CD8-positive, alpha-beta T cell (primary cell): ENCODE measurements at regions of chr15 and their contacts with region 1.

Region 1: GRCh38 chr15:43903864-43904290 is 77.1 kb downstream of the WDR76 start:
- DNase-seq: peak; percentile 6 to 67 (median 45)
- ATAC-seq: peak; percentile 61
- H3K4me3 ChIP-seq: no peak overlapping the region
- H3K4me3 Mint-ChIP-seq: no peak overlapping the region
- H3K27ac ChIP-seq: no peak overlapping the region
- H3K27ac Mint-ChIP-seq: no peak overlapping the region
- H3K4me1 ChIP-seq: peaks cover 4% of the 10 kb centered on the region
- H3K4me1 Mint-ChIP-seq: peaks cover 3% of the 10 kb centered on the region
- H3K27me3 ChIP-seq: no peaks in the 10 kb centered on the region
- H3K27me3 Mint-ChIP-seq: peaks cover 2% of the 10 kb centered on the region
- CTCF ChIP-seq: peak; percentile 62

Region 2: DNA sequence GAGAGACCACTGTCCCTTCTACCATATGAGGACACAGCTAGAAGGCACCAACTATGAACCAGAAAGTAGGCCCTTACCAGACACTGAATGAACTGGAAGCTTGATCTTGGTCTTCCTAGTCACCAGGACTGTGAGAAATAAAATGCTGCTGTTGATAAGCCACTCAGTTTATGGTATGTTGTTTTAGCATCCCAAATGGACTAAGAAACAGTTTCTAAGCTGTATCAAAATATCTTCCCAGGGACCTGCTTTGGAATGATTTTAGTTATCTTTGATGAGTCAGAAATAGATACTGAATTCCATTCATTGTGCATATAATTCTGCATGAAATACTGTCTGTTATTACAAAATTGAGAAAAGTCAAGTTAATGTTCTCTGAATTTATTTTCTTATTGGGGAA is 58.5 kb before region 1 on chr15:
- CTCF ChIA-PET with region 1: no interaction called
- POLR2A ChIA-PET with region 1: no interaction called
- intact Hi-C with region 1: no loop called
- DNase-seq: no peak
- ATAC-seq: no peak
- H3K4me3 ChIP-seq: no peak overlapping the region
- H3K4me3 Mint-ChIP-seq: no peak overlapping the region
- H3K27ac ChIP-seq: no peak overlapping the region
- H3K27ac Mint-ChIP-seq: no peak overlapping the region
- H3K4me1 ChIP-seq: no peaks in the 10 kb centered on the region
- H3K4me1 Mint-ChIP-seq: no peaks in the 10 kb centered on the region
- H3K27me3 ChIP-seq: no peaks in the 10 kb centered on the region
- H3K27me3 Mint-ChIP-seq: no peaks in the 10 kb centered on the region
- CTCF ChIP-seq: no peak

Region 3: GRCh38 chr15:44215594-44215993 is 311.7 kb after region 1 on chr15:
- CTCF ChIA-PET with region 1: interaction called, 9 read pairs
- POLR2A ChIA-PET with region 1: no interaction called
- intact Hi-C with region 1: loop called (anchors 2 to 10 kb)
- DNase-seq: no peak
- ATAC-seq: no peak
- H3K4me3 ChIP-seq: no peak overlapping the region
- H3K4me3 Mint-ChIP-seq: no peak overlapping the region
- H3K27ac ChIP-seq: no peak overlapping the region
- H3K27ac Mint-ChIP-seq: no peak overlapping the region
- H3K4me1 ChIP-seq: no peaks in the 10 kb centered on the region
- H3K4me1 Mint-ChIP-seq: peaks cover 2% of the 10 kb centered on the region
- H3K27me3 ChIP-seq: no peaks in the 10 kb centered on the region
- H3K27me3 Mint-ChIP-seq: peaks cover 30% of the 10 kb centered on the region
- CTCF ChIP-seq: no peak

Region 4: GRCh38 chr15:44243829-44244228 is 340.0 kb after region 1 on chr15:
- CTCF ChIA-PET with region 1: no interaction called
- POLR2A ChIA-PET with region 1: no interaction called
- intact Hi-C with region 1: no loop called
- DNase-seq: no peak
- ATAC-seq: no peak
- H3K4me3 ChIP-seq: no peak overlapping the region
- H3K4me3 Mint-ChIP-seq: no peak overlapping the region
- H3K27ac ChIP-seq: no peak overlapping the region
- H3K27ac Mint-ChIP-seq: no peak overlapping the region
- H3K4me1 ChIP-seq: no peaks in the 10 kb centered on the region
- H3K4me1 Mint-ChIP-seq: no peaks in the 10 kb centered on the region
- H3K27me3 ChIP-seq: no peaks in the 10 kb centered on the region
- H3K27me3 Mint-ChIP-seq: peaks cover 7% of the 10 kb centered on the region
- CTCF ChIP-seq: no peak